ENCODE measurements at regions of chr4 and their contacts with region 1.

Region 1: GRCh38 chr4:144174401-144175067 is 34.0 kb upstream of the GYPA start:
- DNase-seq: peak; percentile 70
- H3K4me3 ChIP-seq: no peak overlapping the region
- H3K27ac ChIP-seq: no peak overlapping the region
- H3K4me1 ChIP-seq: peaks cover 5% of the 10 kb centered on the region
- H3K27me3 ChIP-seq: no peaks in the 10 kb centered on the region
- CTCF ChIP-seq: peak; percentile 53

Region 2: DNA sequence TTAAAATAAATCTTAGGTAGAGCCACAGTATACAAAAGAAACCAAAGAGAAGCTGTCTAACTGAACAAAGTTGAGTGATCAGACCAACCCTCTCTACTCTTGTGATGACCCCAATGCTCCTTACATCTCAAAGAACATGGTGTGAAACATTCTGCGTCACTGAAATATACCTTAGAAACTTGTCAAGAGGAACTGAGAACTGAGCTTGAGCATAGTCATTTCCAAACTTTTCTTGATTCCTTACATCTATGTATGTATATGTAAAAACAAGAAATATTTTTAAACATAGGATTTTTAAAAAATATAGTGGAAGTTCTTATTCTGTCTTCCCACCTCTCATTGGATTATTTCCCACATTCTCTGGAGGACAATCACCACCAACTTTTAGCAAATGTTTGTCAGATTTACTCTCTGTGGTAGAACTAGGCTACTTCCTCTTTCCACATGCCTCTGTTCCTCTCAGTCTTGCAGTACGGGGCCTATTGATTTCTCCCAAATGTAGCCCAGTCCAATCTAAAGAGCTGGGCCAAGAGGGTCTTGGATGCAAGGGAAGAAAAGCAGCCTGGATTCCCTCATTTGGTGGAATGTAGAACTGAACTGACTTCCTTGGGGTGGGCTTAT is 373.3 kb after region 1 on chr4:
- CTCF ChIA-PET with region 1: no interaction called
- POLR2A ChIA-PET with region 1: no interaction called
- intact Hi-C with region 1: no loop called
- DNase-seq: no peak
- H3K4me3 ChIP-seq: no peak overlapping the region
- H3K27ac ChIP-seq: no peak overlapping the region
- H3K4me1 ChIP-seq: no peaks in the 10 kb centered on the region
- H3K27me3 ChIP-seq: no peaks in the 10 kb centered on the region
- CTCF ChIP-seq: no peak

Region 3: DNA sequence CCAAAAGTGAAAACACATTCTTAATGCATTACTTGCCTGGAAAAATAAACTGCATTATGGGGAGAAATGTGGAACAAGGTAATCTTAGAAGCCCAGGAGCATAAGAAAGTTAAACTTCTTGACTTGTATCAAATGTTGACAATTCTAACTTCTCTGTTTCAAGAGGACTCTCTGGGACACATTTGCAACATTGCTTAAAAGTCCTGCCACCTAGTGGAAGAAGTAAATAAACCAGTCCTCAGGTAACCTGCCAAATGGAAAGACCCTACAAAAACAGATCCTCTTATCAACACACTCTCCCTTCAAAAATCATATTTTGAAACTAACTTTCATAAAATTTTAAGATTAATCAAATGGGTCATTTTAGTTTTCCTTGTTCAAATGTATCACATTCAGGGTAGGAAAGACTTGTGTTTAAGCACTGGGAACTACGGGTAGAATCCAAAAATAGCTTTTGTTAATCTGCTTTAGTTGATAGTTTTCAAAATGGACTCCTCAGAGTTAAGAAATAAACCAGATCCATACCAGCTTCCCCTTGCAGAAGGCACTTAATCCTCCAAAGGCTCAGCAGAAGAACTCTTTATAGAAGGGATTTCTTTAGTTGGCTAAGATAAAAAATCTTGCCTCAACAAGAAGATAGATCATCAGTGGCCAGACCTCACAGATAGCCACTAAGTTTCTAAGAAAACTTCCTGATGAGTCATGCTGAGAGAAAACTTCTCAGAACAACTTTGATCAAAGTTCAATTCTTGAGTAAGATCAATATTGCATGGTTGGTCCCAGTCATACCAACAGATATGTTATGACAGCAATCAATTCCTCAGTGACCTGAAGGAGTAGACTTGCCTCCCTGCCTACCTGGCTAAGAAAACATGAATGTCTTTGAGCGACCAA is 613.1 kb after region 1 on chr4:
- CTCF ChIA-PET with region 1: no interaction called
- POLR2A ChIA-PET with region 1: no interaction called
- intact Hi-C with region 1: loop called (anchors 2 kb)
- DNase-seq: peak; percentile 50
- H3K4me3 ChIP-seq: no peak overlapping the region
- H3K27ac ChIP-seq: no peak overlapping the region
- H3K4me1 ChIP-seq: no peaks in the 10 kb centered on the region
- H3K27me3 ChIP-seq: no peaks in the 10 kb centered on the region
- CTCF ChIP-seq: peak; percentile 68

Region 4: DNA sequence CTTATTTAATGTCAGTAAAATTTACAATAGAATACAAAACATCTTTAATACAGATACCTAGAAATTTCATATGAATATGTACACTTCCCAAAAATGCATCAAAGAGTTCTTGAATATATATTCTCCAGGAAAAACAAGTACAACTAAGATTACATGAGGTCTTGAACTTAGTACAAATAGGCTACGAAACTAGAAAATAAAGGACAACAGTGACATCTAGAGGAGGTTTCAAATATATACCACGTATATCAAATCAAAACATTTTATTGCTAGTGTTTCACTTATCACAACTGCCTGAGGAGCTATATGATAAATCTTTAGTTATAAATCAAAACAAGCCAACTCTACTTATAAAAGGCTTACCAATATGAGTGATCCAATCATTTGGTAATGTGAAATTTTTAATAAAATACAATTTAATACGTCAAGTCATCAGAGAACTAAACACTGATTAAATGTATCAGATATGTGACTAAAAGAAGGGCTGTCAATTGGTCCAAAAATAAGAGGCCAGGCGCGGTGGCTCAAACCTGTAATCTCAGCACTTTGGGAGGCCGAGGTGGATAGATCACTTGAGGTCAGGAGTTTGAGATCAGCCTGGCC is 886.9 kb after region 1 on chr4:
- CTCF ChIA-PET with region 1: interaction called, 3 read pairs
- POLR2A ChIA-PET with region 1: no interaction called
- intact Hi-C with region 1: loop called (anchors 2 kb)
- DNase-seq: peak; percentile 69
- H3K4me3 ChIP-seq: no peak overlapping the region
- H3K27ac ChIP-seq: no peak overlapping the region
- H3K4me1 ChIP-seq: peaks cover 34% of the 10 kb centered on the region
- H3K27me3 ChIP-seq: no peaks in the 10 kb centered on the region
- CTCF ChIP-seq: peak; percentile 61

Region 5: GRCh38 chr4:145107126-145107525 is 932.6 kb after region 1 on chr4:
- CTCF ChIA-PET with region 1: no interaction called
- POLR2A ChIA-PET with region 1: no interaction called
- intact Hi-C with region 1: loop called (anchors 5 kb)
- DNase-seq: peak; percentile 21
- H3K4me3 ChIP-seq: no peak overlapping the region
- H3K27ac ChIP-seq: no peak overlapping the region
- H3K4me1 ChIP-seq: peaks cover 33% of the 10 kb centered on the region
- H3K27me3 ChIP-seq: no peaks in the 10 kb centered on the region
- CTCF ChIP-seq: no peak

Region 6: DNA sequence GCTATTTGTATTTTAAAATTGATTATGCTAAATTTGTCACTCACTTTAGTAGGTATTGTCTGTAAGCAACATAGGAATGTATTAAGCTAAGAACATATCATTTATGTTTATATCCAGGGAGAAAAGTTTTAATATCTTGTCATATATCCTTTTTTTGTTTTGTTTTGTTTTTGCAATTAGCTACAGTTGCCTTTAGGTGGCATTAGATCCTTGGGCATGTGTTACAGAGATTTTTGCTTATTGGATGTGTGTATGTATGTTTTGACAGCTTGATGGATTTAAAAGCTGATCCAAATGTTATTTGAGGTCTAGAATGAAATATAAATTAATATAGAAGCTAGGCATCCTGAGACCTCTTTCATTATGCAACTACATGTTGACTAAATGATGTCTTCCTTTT is 1042.0 kb after region 1 on chr4:
- CTCF ChIA-PET with region 1: no interaction called
- POLR2A ChIA-PET with region 1: no interaction called
- intact Hi-C with region 1: loop called (anchors 10 kb)
- DNase-seq: peak; percentile 37
- H3K4me3 ChIP-seq: no peak overlapping the region
- H3K27ac ChIP-seq: no peak overlapping the region
- H3K4me1 ChIP-seq: no peaks in the 10 kb centered on the region
- H3K27me3 ChIP-seq: no peaks in the 10 kb centered on the region
- CTCF ChIP-seq: peak; percentile 65

Region 7: DNA sequence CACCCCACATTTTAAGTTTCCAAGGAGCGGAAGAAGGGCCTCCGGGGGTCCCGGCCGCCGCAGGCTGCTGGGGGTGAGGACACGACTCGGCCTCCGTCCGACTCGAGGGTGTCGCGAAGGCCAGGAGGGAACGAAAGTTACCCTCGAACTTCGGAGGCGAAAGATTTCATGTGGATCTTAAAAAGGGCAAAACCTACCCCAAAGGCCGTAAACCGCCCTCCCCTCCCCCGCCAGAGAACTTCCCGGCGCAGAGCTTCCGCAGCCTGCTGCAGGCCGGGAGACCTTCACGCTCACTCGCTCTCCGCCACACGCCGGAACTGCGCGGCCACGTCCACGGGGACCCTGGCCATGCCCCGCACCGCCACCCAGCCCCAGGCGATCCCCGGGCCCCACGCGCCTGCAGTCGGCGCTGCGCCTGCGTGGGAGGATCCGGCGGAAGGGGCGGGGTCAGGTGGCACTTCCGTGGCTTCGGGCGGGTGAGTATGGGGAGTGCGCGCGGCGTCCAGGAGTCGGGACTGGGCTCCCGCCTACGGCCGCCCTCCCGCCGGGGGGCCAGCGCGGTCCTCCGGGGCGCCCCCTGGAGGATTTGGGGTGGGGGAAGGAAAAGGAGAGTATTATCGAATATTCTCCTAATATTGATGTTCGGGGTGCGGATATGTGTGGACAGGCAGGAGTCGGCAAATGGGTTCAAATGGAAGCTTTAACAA is 1444.6 kb after region 1 on chr4 and contains the start of gene MMAA:
- CTCF ChIA-PET with region 1: no interaction called
- POLR2A ChIA-PET with region 1: no interaction called
- intact Hi-C with region 1: loop called (anchors 5 kb)
- DNase-seq: peak; percentile 97
- H3K4me3 ChIP-seq: peak within 1 kb of the TSS; percentile 70
- H3K27ac ChIP-seq: peak within 1 kb of the TSS; percentile 95
- H3K4me1 ChIP-seq: peaks cover 3% of the 10 kb centered on the region
- H3K27me3 ChIP-seq: no peaks in the 10 kb centered on the region
- CTCF ChIP-seq: peak; percentile 81
- total RNA-seq, gene MMAA: 5.5 and 6.8 TPM in 2 replicates